PC-9 (cell line): ENCODE measurements at regions of chr11 and their contacts with region 1.

Region 1: DNA sequence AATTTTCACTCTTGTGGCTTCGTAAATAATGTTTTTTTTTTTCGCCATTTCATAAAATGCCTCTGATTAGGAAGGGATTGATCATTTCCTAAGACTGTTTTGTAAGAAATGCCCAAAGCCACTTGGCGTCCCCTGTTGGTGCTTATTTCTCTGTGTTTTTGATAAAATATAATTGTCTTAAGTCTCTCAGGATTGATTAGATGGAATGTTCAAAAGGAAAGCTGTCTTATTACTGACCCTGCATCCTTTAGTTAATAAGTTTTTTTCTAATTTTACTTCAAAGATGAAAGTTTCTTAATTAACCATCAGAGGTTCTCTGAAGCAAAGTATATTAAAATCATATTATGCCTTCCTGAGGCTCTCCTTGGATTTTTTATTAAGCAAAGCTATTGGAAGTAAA is 624.3 kb upstream of the TENM4 start:
- DNase-seq: no peak
- H3K4me3 ChIP-seq: no peak overlapping the region
- H3K27ac ChIP-seq: no peak overlapping the region
- H3K4me1 ChIP-seq: no peaks in the 10 kb centered on the region
- H3K27me3 ChIP-seq: no peaks in the 10 kb centered on the region
- CTCF ChIP-seq: no peak

Region 2: GRCh38 chr11:79845002-79845709 is 219.9 kb before region 1 on chr11:
- CTCF ChIA-PET with region 1: no interaction called
- POLR2A ChIA-PET with region 1: interaction called, 12 read pairs
- intact Hi-C with region 1: no loop called
- DNase-seq: no peak
- H3K4me3 ChIP-seq: no peak overlapping the region
- H3K27ac ChIP-seq: no peak overlapping the region
- H3K4me1 ChIP-seq: no peaks in the 10 kb centered on the region
- H3K27me3 ChIP-seq: no peaks in the 10 kb centered on the region
- CTCF ChIP-seq: no peak

Region 3: GRCh38 chr11:80173371-80174136 is 108.5 kb after region 1 on chr11:
- CTCF ChIA-PET with region 1: no interaction called
- POLR2A ChIA-PET with region 1: no interaction called
- intact Hi-C with region 1: no loop called
- DNase-seq: no peak
- H3K4me3 ChIP-seq: no peak overlapping the region
- H3K27ac ChIP-seq: no peak overlapping the region
- H3K4me1 ChIP-seq: no peaks in the 10 kb centered on the region
- H3K27me3 ChIP-seq: no peaks in the 10 kb centered on the region
- CTCF ChIP-seq: no peak